ENCODE measurements at regions of chr2 and their contacts with region 1.

Region 1: GRCh38 chr2:224778474-224778877 is 62.3 kb upstream of the CCDC195 start:
- DNase-seq: peak; percentile 72
- ATAC-seq: peak; percentile 79
- H3K4me3 Mint-ChIP-seq: no peak overlapping the region
- H3K27ac Mint-ChIP-seq: peak overlapping the region; percentile 19
- H3K4me1 Mint-ChIP-seq: peaks cover 6% of the 10 kb centered on the region
- H3K27me3 Mint-ChIP-seq: no peaks in the 10 kb centered on the region

Region 2: DNA sequence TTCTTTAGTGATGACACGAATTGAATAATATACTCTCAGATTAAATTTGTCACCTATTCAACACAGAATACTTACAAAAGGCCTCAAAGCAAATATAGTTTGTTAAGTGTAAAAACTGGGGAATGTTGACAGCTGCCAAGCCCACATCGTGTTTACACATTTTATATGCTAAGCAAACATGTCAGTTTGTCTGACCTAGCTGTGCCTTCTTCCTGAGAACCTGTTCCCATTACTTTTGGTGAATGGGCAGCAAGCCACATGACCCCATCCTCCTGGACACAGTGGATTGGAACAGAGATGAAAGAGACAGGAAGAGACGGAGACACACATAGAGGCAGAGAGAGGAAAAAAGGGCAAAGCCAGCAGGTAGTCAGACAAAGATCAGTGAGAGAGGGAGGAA is 170.4 kb before region 1 on chr2:
- CTCF ChIA-PET with region 1: no interaction called
- POLR2A ChIA-PET with region 1: interaction called, 12 read pairs
- intact Hi-C with region 1: no loop called
- DNase-seq: no peak
- ATAC-seq: no peak
- H3K4me3 Mint-ChIP-seq: no peak overlapping the region
- H3K27ac Mint-ChIP-seq: no peak overlapping the region
- H3K4me1 Mint-ChIP-seq: peaks cover 5% of the 10 kb centered on the region
- H3K27me3 Mint-ChIP-seq: peaks cover 2% of the 10 kb centered on the region

Region 3: DNA sequence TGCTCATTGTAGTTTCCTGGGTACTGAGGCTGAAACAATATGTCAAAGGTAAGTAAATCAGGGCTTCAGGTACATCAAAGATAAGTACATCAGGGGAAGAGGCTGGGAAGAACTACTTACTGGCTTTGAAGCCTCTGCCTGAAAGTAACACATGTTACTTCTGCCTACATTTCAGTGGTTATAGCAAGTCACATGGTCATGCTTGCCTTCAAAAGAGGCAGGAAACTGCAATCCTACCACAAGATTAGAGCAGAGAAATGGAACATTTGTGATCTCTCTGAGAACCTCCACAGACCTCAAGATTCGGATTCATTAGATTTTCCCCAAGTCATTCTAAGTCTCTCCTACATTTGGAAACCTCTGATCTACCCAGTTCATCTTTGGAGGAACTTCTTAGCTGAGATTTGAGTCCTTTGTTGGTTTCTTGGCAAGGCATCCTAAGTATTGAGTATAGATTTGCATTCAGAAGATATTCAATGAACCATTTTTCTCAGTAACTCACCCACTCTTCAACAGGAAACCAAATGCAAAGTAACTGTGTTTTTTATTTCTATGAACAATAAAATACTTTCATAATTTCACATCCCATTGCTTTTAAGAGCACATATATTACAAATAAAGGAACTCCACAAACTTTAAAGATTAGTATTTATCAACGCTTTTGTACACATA is 13.8 kb before region 1 on chr2:
- CTCF ChIA-PET with region 1: interaction called, 19 read pairs
- POLR2A ChIA-PET with region 1: no interaction called
- intact Hi-C with region 1: no loop called
- DNase-seq: no peak
- ATAC-seq: peak; percentile 80
- H3K4me3 Mint-ChIP-seq: no peak overlapping the region
- H3K27ac Mint-ChIP-seq: peak overlapping the region; percentile 85
- H3K4me1 Mint-ChIP-seq: peaks cover 39% of the 10 kb centered on the region
- H3K27me3 Mint-ChIP-seq: no peaks in the 10 kb centered on the region

Region 4: GRCh38 chr2:225340923-225341322 is 562.4 kb after region 1 on chr2:
- CTCF ChIA-PET with region 1: no interaction called
- POLR2A ChIA-PET with region 1: no interaction called
- intact Hi-C with region 1: no loop called
- DNase-seq: no peak
- ATAC-seq: no peak
- H3K4me3 Mint-ChIP-seq: no peak overlapping the region
- H3K27ac Mint-ChIP-seq: no peak overlapping the region
- H3K4me1 Mint-ChIP-seq: no peaks in the 10 kb centered on the region
- H3K27me3 Mint-ChIP-seq: peaks cover 8% of the 10 kb centered on the region

Measured in activated CD4-positive, alpha-beta T cell treated with anti-CD3 and anti-CD28 coated beads for 36 hours (primary cell).